ENCODE measurements at regions of chr16 and their contacts with region 1.

Region 1: GRCh38 chr16:67521095-67521804 is 7.4 kb upstream of the RIPOR1 start:
- DNase-seq: peak; percentile 97
- H3K4me3 Mint-ChIP-seq: peak overlapping the region; percentile 86
- H3K27ac Mint-ChIP-seq: peak overlapping the region; percentile 98
- H3K4me1 Mint-ChIP-seq: peaks cover 18% of the 10 kb centered on the region
- H3K27me3 Mint-ChIP-seq: peaks cover 19% of the 10 kb centered on the region
- CTCF ChIP-seq: peak; percentile 94

Region 2: DNA sequence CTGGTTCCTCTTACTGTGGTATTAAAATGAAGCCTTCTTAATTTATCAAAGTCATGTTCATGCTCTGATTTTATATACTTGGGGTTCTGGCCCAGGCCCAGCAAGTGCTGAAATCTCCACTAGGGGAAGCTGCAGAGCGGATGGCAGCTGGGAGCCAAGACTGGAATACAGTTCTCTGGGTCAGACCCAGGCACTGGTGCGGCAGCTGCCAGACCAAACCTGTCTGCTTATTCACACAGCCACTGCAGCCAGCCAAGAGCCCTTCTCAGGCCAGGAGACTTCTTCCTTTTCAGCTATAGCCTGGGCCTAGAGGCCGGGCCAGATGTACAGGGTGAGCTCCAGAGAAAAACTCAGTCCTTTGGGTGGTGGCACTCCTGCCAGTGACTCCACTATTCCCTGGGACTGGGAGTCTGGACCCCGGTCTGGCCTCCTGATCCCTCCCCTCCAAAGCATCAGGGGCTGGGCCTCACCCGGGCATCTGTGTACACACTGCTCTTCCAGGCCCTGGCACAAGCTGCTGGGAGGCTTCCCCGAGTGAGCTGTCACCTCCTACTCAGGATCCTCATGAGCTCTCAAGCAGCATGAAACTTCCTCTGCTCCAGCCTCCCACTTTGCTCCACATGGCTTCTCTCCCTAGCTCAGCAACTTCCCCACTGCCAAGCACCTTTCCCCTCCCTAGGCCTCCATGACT is 64.7 kb before region 1 on chr16:
- CTCF ChIA-PET with region 1: no interaction called
- POLR2A ChIA-PET with region 1: no interaction called
- intact Hi-C with region 1: no loop called
- DNase-seq: peak; percentile 25
- H3K4me3 Mint-ChIP-seq: no peak overlapping the region
- H3K27ac Mint-ChIP-seq: no peak overlapping the region
- H3K4me1 Mint-ChIP-seq: peaks cover 12% of the 10 kb centered on the region
- H3K27me3 Mint-ChIP-seq: no peaks in the 10 kb centered on the region
- CTCF ChIP-seq: peak; percentile 32

Region 3: DNA sequence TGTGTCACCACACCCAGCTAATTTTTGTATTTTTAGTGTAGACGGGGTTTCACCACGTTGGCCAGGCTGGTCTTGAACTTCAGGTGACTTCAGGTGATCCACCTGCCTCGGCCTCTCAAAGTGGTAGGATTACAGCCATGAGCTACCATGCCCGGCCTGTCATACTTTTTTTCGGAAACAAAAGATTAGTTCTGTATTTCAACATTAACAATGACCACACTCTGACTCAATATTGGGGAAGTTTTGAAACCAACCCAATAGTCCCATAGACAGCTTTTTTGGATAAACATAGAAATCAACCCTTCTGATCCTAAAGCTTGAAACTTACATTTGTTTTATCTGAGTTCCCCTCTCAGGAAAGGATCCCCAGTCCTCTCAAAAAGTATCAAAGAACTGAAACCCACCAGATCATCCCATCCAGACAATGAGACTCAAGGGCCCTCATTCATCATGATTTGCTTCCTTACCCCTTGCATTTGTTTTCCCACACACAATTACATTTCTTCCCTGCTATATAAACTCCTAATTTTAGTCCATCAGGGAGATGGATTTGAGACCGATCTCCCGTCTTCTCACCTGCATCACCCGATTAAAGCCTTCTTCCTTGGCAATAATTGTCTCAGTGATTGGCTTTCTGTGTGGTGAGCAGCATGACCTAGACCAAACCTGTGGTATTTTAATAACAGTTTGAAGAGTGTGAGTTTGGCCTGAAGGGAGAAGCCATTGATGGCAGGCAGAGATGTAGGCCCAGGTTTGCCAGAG is 30.7 kb before region 1 on chr16:
- CTCF ChIA-PET with region 1: interaction called, 69 read pairs
- POLR2A ChIA-PET with region 1: interaction called, 4 read pairs
- intact Hi-C with region 1: no loop called
- DNase-seq: peak; percentile 36
- H3K4me3 Mint-ChIP-seq: no peak overlapping the region
- H3K27ac Mint-ChIP-seq: no peak overlapping the region
- H3K4me1 Mint-ChIP-seq: no peaks in the 10 kb centered on the region
- H3K27me3 Mint-ChIP-seq: no peaks in the 10 kb centered on the region
- CTCF ChIP-seq: no peak

Region 4: GRCh38 chr16:67546761-67547422 is 25.6 kb after region 1 on chr16:
- CTCF ChIA-PET with region 1: interaction called, 53 read pairs
- POLR2A ChIA-PET with region 1: interaction called, 9 read pairs
- intact Hi-C with region 1: loop called (anchors 1 kb)
- DNase-seq: peak; percentile 75
- H3K4me3 Mint-ChIP-seq: no peak overlapping the region
- H3K27ac Mint-ChIP-seq: peak overlapping the region; percentile 86
- H3K4me1 Mint-ChIP-seq: peaks cover 38% of the 10 kb centered on the region
- H3K27me3 Mint-ChIP-seq: no peaks in the 10 kb centered on the region
- CTCF ChIP-seq: peak; percentile 89

Region 5: GRCh38 chr16:67571981-67572431 is 50.8 kb after region 1 on chr16:
- CTCF ChIA-PET with region 1: interaction called, 10 read pairs
- POLR2A ChIA-PET with region 1: interaction called, 4 read pairs
- intact Hi-C with region 1: no loop called
- DNase-seq: peak; percentile 12
- H3K4me3 Mint-ChIP-seq: no peak overlapping the region
- H3K27ac Mint-ChIP-seq: peak overlapping the region; percentile 80
- H3K4me1 Mint-ChIP-seq: peaks cover 8% of the 10 kb centered on the region
- H3K27me3 Mint-ChIP-seq: no peaks in the 10 kb centered on the region
- CTCF ChIP-seq: no peak

Region 6: GRCh38 chr16:67672739-67673662 is 151.8 kb after region 1 on chr16:
- CTCF ChIA-PET with region 1: interaction called, 57 read pairs
- POLR2A ChIA-PET with region 1: interaction called, 5 read pairs
- intact Hi-C with region 1: loop called (anchors 1 kb)
- DNase-seq: peak; percentile 83
- H3K4me3 Mint-ChIP-seq: no peak overlapping the region
- H3K27ac Mint-ChIP-seq: peak overlapping the region; percentile 73
- H3K4me1 Mint-ChIP-seq: peaks cover 15% of the 10 kb centered on the region
- H3K27me3 Mint-ChIP-seq: no peaks in the 10 kb centered on the region
- CTCF ChIP-seq: peak; percentile 68

Region 7: DNA sequence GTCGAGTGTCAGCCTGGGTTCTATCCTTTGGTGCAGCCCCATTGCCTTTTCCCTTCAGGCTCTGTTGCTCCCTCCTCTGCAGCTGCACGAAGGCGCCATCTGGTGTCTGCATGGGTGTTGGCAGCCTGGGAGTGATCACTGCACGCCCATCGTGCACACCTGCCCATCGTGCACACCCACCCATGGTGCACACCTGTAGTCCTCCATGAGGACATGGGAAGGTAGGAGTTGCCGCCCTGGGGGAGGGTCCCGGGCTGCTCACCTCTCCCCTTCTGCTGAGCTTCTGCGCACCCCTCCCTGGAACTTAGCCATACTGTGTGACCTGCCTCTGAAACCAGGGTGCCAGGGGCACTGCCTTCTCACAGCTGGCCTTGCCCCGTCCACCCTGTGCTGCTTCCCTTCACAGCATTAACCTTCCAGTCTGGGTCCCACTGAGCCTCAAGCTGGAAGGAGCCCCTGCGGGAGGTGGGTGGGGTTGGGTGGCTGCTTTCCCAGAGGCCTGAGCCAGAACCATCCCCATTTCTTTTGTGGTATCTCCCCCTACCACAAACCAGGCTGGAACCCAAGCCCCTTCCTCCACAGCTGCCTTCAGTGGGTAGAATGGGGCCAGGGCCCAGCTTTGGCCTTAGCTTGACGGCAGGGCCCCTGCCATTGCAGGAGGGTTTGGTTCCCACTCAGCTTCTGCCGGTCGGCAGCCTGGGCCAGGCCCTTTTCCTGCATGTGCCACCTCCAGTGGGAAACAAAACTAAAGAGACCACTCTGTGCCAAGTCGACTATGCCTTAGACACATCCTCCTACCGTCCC is 407.5 kb after region 1 on chr16:
- CTCF ChIA-PET with region 1: interaction called, 4 read pairs
- POLR2A ChIA-PET with region 1: no interaction called
- intact Hi-C with region 1: loop called (anchors 1 kb)
- DNase-seq: peak; percentile 75
- H3K4me3 Mint-ChIP-seq: no peak overlapping the region
- H3K27ac Mint-ChIP-seq: no peak overlapping the region
- H3K4me1 Mint-ChIP-seq: peaks cover under 1% of the 10 kb centered on the region
- H3K27me3 Mint-ChIP-seq: no peaks in the 10 kb centered on the region
- CTCF ChIP-seq: peak; percentile 86

Measured in MCF 10A (cell line).